Panc1 (cell line): ENCODE measurements at regions of chr1 and their contacts with region 1.

Region 1: GRCh38 chr1:32205401-32206370 is at the start of gene IQCC:
- DNase-seq: no peak
- ATAC-seq: peak; percentile 88
- H3K4me3 ChIP-seq: peak within 1 kb of the TSS; percentile 63 to 90
- H3K27ac ChIP-seq: peak within 1 kb of the TSS; percentile 77
- H3K4me1 ChIP-seq: peaks cover 24% of the 10 kb centered on the region
- H3K27me3 ChIP-seq: no peaks in the 10 kb centered on the region
- CTCF ChIP-seq: no peak
- total RNA-seq, gene IQCC: 4.4 TPM

Region 2: GRCh38 chr1:32072622-32073298 is 132.9 kb before region 1 on chr1 and contains the start of gene TMEM39B:
- CTCF ChIA-PET with region 1: interaction called, 19 read pairs
- POLR2A ChIA-PET with region 1: no interaction called
- in situ Hi-C with region 1: no loop called
- intact Hi-C with region 1: no loop called
- DNase-seq: peak; percentile 58
- ATAC-seq: peak; percentile 95
- H3K4me3 ChIP-seq: peak within 1 kb of the TSS; percentile 65 to 84
- H3K27ac ChIP-seq: peak within 1 kb of the TSS; percentile 93
- H3K4me1 ChIP-seq: peaks cover 14% of the 10 kb centered on the region
- H3K27me3 ChIP-seq: no peaks in the 10 kb centered on the region
- CTCF ChIP-seq: no peak
- total RNA-seq, gene TMEM39B: 35.0 TPM

Region 3: DNA sequence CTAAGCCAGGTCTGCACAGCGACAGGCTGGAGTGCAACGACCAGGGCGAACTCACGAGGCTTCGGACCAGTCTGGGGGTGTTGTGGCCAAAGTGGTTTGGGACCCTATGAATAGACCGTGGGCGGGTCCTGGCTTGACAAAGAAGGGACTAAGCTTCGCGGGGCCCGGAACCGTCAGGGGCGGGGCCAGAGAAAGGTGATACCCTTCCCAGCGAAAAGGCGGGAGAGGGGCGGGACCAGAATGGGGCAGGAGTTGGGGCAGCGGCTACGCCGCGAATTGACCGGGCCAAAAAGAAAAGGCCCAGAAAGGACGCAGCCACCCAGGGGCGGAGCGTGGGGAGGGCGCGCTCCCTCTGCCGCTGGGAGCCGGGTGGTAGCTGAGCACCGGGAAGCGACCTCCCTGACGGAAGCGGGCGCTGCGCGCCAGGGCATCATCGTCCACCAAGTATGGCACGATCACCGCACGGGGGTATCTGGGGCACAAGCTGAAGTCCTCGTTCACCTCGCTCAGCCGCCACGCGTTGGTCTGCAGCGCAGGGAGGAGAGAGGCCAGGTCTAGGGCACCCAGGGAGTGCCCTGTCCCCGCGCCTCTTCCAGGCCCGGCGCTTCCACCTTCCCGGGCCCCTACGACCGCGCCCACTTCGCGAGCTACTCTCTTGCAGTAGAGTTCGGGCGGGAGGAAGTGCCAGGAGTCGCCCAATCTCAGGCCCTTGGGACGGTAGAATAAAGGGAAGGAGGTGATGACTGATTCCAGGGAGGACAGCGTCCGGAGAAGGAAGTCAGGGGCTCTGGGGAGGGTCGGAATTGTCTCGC is 34.7 kb after region 1 on chr1:
- CTCF ChIA-PET with region 1: interaction called, 18 read pairs
- POLR2A ChIA-PET with region 1: no interaction called
- in situ Hi-C with region 1: no loop called
- intact Hi-C with region 1: no loop called
- DNase-seq: no peak
- ATAC-seq: peak; percentile 76
- H3K4me3 ChIP-seq: peak overlapping the region; percentile 60 to 90
- H3K27ac ChIP-seq: peak overlapping the region; percentile 82
- H3K4me1 ChIP-seq: peaks cover 12% of the 10 kb centered on the region
- H3K27me3 ChIP-seq: no peaks in the 10 kb centered on the region
- CTCF ChIP-seq: peak; percentile 72

Region 4: DNA sequence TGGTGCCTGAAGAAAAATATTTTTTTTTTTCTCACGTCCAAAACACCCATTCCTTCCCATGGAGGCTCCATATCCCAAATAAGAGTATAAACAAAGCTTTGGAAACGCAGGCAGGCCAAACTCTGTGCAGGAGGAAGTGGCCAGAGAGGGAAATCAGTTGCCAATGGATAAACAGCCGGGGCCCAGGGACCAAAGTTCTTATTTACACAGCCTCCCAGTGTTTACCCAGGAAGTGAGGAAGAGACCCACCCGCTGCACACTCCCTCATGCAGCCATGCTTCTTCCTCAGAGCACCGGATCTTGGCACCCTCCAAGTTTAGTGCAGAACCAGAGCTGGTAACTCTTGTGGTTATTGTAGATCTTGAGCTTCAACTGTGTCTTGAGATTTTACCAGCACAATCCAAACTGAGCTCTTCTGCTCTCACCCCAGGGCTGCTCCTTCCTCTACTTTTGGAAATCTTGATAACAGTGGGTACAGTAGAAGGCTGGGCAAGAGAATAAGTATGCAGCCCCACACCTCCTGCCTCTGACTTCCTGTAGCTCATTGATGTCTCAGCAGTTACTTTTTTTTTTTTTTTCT is 116.1 kb after region 1 on chr1:
- CTCF ChIA-PET with region 1: no interaction called
- POLR2A ChIA-PET with region 1: no interaction called
- in situ Hi-C with region 1: no loop called
- intact Hi-C with region 1: no loop called
- DNase-seq: peak; percentile 25
- ATAC-seq: peak; percentile 72
- H3K4me3 ChIP-seq: no peak overlapping the region
- H3K27ac ChIP-seq: no peak overlapping the region
- H3K4me1 ChIP-seq: no peaks in the 10 kb centered on the region
- H3K27me3 ChIP-seq: no peaks in the 10 kb centered on the region
- CTCF ChIP-seq: no peak

Region 5: DNA sequence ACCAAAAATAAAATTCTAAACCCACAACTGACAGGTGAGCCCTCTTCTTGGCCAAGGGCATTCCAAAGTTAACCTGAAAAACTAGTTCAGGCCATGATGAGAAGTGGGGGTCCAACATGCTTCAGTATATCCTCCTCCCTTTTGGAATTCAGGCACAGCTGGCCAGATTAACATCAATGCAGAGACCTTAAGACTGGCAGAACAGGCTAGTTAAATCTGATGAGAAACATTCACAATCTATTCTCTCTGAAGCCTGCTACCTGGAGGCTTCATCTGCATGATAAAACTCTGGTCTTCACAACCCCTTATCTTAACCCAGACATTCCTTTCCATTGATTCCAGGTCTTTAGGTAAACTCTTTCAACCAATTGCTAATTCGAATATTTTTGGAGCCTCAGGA is 232.4 kb after region 1 on chr1:
- CTCF ChIA-PET with region 1: no interaction called
- POLR2A ChIA-PET with region 1: no interaction called
- in situ Hi-C with region 1: no loop called
- intact Hi-C with region 1: no loop called
- DNase-seq: no peak
- ATAC-seq: no peak
- H3K4me3 ChIP-seq: no peak overlapping the region
- H3K27ac ChIP-seq: no peak overlapping the region
- H3K4me1 ChIP-seq: no peaks in the 10 kb centered on the region
- H3K27me3 ChIP-seq: no peaks in the 10 kb centered on the region; the same call in 1 of the 2 replicates
- CTCF ChIP-seq: no peak